HAP-1 (cell line): ENCODE measurements at regions of chr1 and their contacts with region 1.

Region 1: GRCh38 chr1:208081972-208082371 is 162.2 kb downstream of the PLXNA2 start:
- DNase-seq: no peak
- H3K4me3 ChIP-seq: no peak overlapping the region
- H3K4me1 ChIP-seq: no peaks in the 10 kb centered on the region
- H3K27me3 ChIP-seq: peaks cover 6% of the 10 kb centered on the region; the same call in 1 of the 2 replicates

Region 2: GRCh38 chr1:208149776-208150514 is 68.0 kb after region 1 on chr1:
- in situ Hi-C with region 1: loop called (anchors 10 kb)
- DNase-seq: no peak
- H3K4me3 ChIP-seq: no peak overlapping the region
- H3K4me1 ChIP-seq: no peaks in the 10 kb centered on the region
- H3K27me3 ChIP-seq: no peaks in the 10 kb centered on the region